ENCODE measurements at regions of chr7 and their contacts with region 1.

Region 1: DNA sequence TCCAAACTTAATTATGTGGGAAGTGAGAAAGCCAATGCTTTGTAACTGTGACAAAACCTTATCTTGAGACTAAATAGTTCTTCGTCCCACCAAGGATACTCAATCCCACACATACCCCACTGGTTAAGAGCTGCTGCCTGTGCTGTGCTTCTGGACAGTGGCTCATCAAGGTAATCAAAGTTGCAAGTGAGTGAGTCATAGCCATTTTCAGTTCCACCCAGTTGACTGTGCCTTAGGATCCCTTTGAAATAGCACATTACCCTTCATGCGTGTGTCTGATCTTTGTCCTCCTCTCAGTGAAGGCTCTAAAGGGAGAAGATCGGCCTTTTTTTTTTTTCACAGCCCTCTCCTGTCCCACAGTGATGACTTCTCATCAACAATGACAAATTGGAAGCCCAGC is 706.0 kb upstream of the AUTS2 start:
- DNase-seq: no peak
- H3K4me3 ChIP-seq: no peak overlapping the region
- H3K27ac ChIP-seq: no peak overlapping the region
- H3K4me1 ChIP-seq: no peaks in the 10 kb centered on the region
- H3K27me3 ChIP-seq: no peaks in the 10 kb centered on the region
- CTCF ChIP-seq: no peak

Region 2: GRCh38 chr7:68833422-68833821 is 58.8 kb before region 1 on chr7:
- intact Hi-C with region 1: loop called (anchors 10 kb)
- DNase-seq: no peak
- H3K4me3 ChIP-seq: no peak overlapping the region
- H3K27ac ChIP-seq: no peak overlapping the region
- H3K4me1 ChIP-seq: no peaks in the 10 kb centered on the region
- H3K27me3 ChIP-seq: no peaks in the 10 kb centered on the region
- CTCF ChIP-seq: no peak